ENCODE measurements at regions of chr13 and their contacts with region 1.

Region 1: DNA sequence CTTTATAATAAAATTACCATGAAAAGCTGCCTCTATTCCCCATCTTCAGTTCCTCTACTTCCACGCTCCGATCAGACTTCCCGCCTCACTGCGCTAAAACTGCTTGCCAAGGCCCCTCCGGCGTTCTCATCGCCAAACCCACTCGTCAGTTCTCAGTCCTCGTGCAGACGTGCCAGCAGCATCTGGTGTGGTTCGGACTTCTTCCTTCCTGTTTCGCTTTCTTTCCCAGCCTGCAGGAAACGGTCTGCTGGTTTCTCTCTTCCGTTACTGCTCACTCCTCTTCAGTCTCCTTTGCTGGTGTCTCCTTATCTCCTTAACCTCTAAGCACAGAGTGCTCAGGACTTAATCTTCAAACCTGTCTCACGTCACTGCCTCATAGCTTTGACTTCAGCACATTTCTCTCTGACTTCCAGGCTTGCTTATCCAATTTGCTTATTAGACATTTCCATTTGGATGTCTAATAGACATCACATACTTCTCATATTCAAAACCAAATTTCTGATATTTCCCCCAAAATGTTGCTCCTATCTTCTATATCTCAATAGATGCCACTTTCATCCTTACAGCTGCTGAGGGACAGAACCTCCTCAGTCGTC is 40.3 kb downstream of the RCBTB2 start:
- DNase-seq: peak; percentile 80
- H3K4me3 Mint-ChIP-seq: no peak overlapping the region
- H3K27ac Mint-ChIP-seq: no peak overlapping the region
- H3K4me1 Mint-ChIP-seq: peaks cover 41% of the 10 kb centered on the region
- H3K27me3 Mint-ChIP-seq: no peaks in the 10 kb centered on the region

Region 2: GRCh38 chr13:48037346-48038173 is 455.0 kb before region 1 on chr13 and contains the start of gene NUDT15:
- CTCF ChIA-PET with region 1: no interaction called
- POLR2A ChIA-PET with region 1: no interaction called
- intact Hi-C with region 1: loop called (anchors 5 kb)
- DNase-seq: peak; percentile 97
- H3K4me3 Mint-ChIP-seq: peak within 1 kb of the TSS; percentile 96
- H3K27ac Mint-ChIP-seq: peak within 1 kb of the TSS; percentile 98
- H3K4me1 Mint-ChIP-seq: peaks cover 29% of the 10 kb centered on the region
- H3K27me3 Mint-ChIP-seq: no peaks in the 10 kb centered on the region
- total RNA-seq, gene NUDT15: 18.5 to 19.2 TPM

Region 3: DNA sequence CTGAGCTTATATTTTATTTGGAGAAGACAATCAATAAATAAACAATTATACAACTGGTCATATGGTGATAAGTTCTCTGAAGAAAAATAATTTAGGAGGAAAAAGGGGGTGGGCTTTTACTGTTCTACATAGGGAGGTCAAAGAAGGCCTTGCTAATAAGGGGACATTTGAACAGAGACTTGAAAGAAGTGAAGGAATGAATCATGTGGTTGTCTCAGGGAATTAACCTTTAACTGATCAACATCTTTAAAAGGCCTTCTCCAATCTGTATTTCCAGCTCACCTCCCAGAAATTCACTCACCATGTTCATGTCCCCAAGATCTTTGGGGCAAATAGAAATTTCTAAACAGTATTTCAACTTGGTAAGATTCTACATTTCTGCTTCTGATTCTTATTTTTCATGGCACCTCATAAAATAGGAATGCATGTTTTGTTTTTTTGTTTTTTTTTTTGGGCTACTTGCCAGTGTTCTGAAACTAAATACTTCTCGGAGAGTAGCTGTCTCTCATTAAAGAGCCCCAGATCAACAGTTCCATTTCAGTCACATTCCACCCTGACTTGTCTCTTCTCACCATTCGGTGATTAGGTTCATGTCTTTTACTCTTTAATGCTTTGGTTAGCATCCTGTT is 60.5 kb before region 1 on chr13:
- CTCF ChIA-PET with region 1: no interaction called
- POLR2A ChIA-PET with region 1: no interaction called
- intact Hi-C with region 1: loop called (anchors 5 kb)
- DNase-seq: no peak
- H3K4me3 Mint-ChIP-seq: peak overlapping the region; percentile 20
- H3K27ac Mint-ChIP-seq: peak overlapping the region; percentile 45
- H3K4me1 Mint-ChIP-seq: peaks cover 57% of the 10 kb centered on the region
- H3K27me3 Mint-ChIP-seq: no peaks in the 10 kb centered on the region

Region 4: DNA sequence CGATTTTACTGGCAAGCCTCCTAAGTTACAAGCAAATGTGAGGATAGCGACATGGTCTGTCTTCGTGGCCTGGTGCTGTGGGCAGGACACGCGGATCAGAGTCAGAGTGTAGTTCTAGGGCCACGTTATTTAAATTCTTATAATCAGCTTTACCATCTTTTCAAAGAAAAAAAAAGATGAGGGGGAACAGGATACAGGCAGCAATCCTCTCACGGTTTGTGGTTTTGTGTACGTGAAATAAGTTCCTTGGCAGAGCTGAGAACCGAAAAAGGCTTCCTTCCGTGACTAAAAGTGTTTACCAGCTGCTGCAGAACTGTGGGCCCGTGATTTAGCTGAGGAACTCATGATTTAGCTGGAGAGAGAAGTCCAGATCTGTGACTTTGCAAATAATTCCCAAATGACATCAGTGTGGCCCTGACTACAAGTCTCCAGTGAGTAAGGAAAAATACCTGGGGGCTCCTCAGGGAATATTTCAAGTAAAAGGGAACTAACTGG is 13.1 kb after region 1 on chr13:
- CTCF ChIA-PET with region 1: interaction called, 4 read pairs
- POLR2A ChIA-PET with region 1: interaction called, 5 read pairs
- intact Hi-C with region 1: loop called (anchors 1 kb)
- DNase-seq: peak; percentile 61
- H3K4me3 Mint-ChIP-seq: peak overlapping the region; percentile 39
- H3K27ac Mint-ChIP-seq: peak overlapping the region; percentile 68
- H3K4me1 Mint-ChIP-seq: peaks cover 55% of the 10 kb centered on the region
- H3K27me3 Mint-ChIP-seq: no peaks in the 10 kb centered on the region

Region 5: GRCh38 chr13:48562296-48563066 is 69.9 kb after region 1 on chr13:
- CTCF ChIA-PET with region 1: no interaction called
- POLR2A ChIA-PET with region 1: no interaction called
- intact Hi-C with region 1: loop called (anchors 1 kb)
- DNase-seq: peak; percentile 79
- H3K4me3 Mint-ChIP-seq: peak overlapping the region; percentile 31
- H3K27ac Mint-ChIP-seq: peak overlapping the region; percentile 58
- H3K4me1 Mint-ChIP-seq: peaks cover 43% of the 10 kb centered on the region
- H3K27me3 Mint-ChIP-seq: peaks cover 52% of the 10 kb centered on the region

Measured in activated CD4-positive, alpha-beta memory T cell treated with anti-CD3 and anti-CD28 coated beads for 36 hours (primary cell).